Ovary (tissue), 10 donors: ENCODE measurements at regions of chr2 and their contacts with region 1.

Region 1: GRCh38 chr2:176814306-176815052 is 398.1 kb upstream of the HNRNPA3 start:
- DNase-seq: no peak
- H3K4me3 ChIP-seq: no peak overlapping the region
- H3K27ac ChIP-seq: no peak overlapping the region
- H3K4me1 ChIP-seq: peaks cover 9% of the 10 kb centered on the region
- H3K27me3 ChIP-seq: no peaks in the 10 kb centered on the region
- CTCF ChIP-seq: peak; percentile 34 to 35 (median 35)
- EP300 ChIP-seq: no peak
- POLR2A ChIP-seq: no peak

Region 2: GRCh38 chr2:176126929-176127773 is 687.3 kb before region 1 on chr2:
- intact Hi-C with region 1: loop called in 1 of 4 experiments (anchors 10 kb)
- DNase-seq: peak; percentile 67 to 87 (median 82)
- H3K4me3 ChIP-seq: peak overlapping the region; percentile 10
- H3K27ac ChIP-seq: no peak overlapping the region
- H3K4me1 ChIP-seq: peaks cover 2% of the 10 kb centered on the region
- H3K27me3 ChIP-seq: no peaks in the 10 kb centered on the region
- CTCF ChIP-seq: peak; percentile 88 to 95 (median 90)
- EP300 ChIP-seq: no peak
- POLR2A ChIP-seq: no peak

Region 3: GRCh38 chr2:176653479-176654443 is 160.7 kb before region 1 on chr2:
- intact Hi-C with region 1: loop called in 1 of 4 experiments (anchors 10 kb)
- DNase-seq: peak; percentile 41 to 70 (median 60)
- H3K4me3 ChIP-seq: no peak overlapping the region
- H3K27ac ChIP-seq: no peak overlapping the region
- H3K4me1 ChIP-seq: no peaks in the 10 kb centered on the region
- H3K27me3 ChIP-seq: no peaks in the 10 kb centered on the region
- CTCF ChIP-seq: peak; percentile 45 to 59 (median 56)
- EP300 ChIP-seq: no peak
- POLR2A ChIP-seq: no peak

Region 4: DNA sequence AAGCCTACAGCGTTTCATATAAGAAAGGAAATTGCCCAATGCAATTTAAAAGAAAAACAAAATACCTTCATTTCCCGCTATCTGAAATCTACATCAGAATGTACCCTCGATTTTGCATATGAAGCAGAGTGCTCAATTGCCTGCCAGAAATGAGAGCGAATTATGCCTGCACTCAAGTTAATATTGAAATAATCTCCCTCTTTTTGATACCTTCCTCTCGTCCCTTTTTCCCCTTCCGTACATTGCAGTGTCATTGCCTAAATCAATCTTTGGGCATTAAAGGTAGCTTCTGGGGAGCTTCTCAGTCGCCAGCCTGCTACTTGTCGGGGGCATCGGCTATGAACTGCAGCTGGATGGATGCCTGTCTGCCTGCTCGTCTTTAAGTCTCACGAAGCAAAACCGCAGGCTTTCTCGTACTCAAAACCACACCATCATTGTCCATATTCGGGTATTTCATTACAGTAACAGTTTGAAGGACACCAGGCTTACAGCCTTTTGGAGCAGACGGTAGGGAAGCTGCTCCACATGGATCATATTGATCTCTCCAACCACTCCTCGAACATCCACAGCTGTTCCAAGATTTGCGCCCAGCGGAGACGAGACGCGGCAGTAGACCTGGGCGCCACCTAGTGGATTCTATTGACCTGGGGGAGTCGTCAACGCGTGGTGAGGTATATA is 334.1 kb after region 1 on chr2:
- intact Hi-C with region 1: loop called in 1 of 4 experiments (anchors 10 kb)
- DNase-seq: peak; percentile 49 to 71 (median 70)
- H3K4me3 ChIP-seq: peak overlapping the region; percentile 33
- H3K27ac ChIP-seq: no peak overlapping the region
- H3K4me1 ChIP-seq: no peaks in the 10 kb centered on the region
- H3K27me3 ChIP-seq: no peaks in the 10 kb centered on the region
- CTCF ChIP-seq: peak in 2 of 3 donors; percentile 10 to 19
- EP300 ChIP-seq: no peak
- POLR2A ChIP-seq: no peak